Aorta (tissue), 5 donors: ENCODE measurements at regions of chr1 and their contacts with region 1.

Region 1: GRCh38 chr1:58783993-58784757 is at the start of gene JUN:
- DNase-seq: peak; percentile 100
- ATAC-seq: peak; percentile 92
- H3K4me3 ChIP-seq: peak within 1 kb of the TSS; percentile 93 to 94
- H3K27ac ChIP-seq: peak within 1 kb of the TSS; percentile 91 to 100
- H3K4me1 ChIP-seq: no peaks in the 10 kb centered on the region
- H3K27me3 ChIP-seq: no peaks in the 10 kb centered on the region
- total RNA-seq, gene JUN: 101 to 275 TPM

Region 2: DNA sequence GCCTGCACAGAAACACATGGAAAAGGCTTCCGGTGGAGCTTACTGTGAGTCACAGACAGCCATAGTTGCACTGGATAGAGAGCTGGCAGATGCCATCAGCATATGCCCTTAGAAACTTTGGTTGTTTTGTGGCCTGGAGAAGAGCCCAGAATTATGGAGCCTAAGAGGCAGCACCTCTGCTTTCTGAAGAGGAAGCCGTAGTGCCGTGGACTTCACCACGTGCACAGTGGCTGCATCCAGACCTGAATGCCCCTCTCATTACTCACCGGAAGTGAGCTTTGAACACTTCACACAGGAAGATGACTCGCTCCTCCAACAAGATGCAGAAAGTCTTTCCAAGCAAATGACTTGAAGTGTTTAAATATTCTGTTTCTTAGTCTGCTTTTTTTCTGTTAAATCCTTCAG is 28.7 kb before region 1 on chr1:
- intact Hi-C with region 1: loop called in 1 of 2 experiments (anchors 1 kb)
- DNase-seq: peak; percentile 87 to 91
- ATAC-seq: peak; percentile 86
- H3K4me3 ChIP-seq: no peak overlapping the region
- H3K27ac ChIP-seq: peak overlapping the region; percentile 33 to 79
- H3K4me1 ChIP-seq: peaks cover 0 to 4% of the 10 kb centered on the region in 2 donors
- H3K27me3 ChIP-seq: no peaks in the 10 kb centered on the region

Region 3: DNA sequence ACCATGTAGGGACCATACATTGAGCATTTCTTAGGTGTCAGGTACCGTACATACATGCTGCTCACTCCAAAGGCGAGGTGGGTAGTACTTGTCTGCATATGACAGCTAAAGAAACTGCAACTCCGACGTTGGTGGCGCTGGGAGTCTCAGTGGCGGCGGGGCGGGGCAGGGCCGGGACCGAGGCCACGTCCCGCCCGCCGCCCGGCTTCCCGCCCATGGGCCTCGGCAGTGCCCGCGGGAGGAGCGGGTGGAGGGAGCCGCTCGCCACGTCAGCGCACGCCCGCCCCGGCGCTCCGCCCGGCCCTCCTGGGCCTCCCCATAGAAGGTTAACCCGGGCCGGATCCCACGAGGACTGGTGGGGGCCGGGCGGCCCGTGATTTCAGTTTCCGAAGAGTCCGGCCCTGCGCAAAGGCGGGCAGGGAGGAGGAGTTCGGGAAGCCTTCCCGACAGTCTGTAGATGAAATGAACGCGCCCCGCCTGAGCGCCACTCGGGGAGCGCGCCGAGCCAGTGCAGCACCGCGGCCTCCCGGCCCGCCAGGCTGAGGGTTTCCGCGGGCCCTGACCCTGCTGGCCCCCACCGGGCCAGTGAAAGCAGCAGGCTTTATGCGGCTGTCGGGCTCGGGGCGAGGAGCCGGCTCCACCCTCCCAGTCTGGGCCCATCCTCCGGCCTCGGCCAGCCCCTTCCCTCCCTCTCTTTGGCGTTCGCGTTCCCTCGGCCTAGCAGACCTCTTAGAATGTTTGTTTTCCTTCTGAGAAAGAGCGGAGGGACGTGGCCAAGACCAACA is 119.5 kb after region 1 on chr1:
- intact Hi-C with region 1: loop called (anchors 1 to 5 kb)
- DNase-seq: peak; percentile 97 to 98
- ATAC-seq: peak; percentile 98
- H3K4me3 ChIP-seq: peak overlapping the region; percentile 24 to 42
- H3K27ac ChIP-seq: peak overlapping the region; percentile 83 to 94
- H3K4me1 ChIP-seq: no peaks in the 10 kb centered on the region
- H3K27me3 ChIP-seq: no peaks in the 10 kb centered on the region

Region 4: GRCh38 chr1:59013276-59013927 is 229.2 kb after region 1 on chr1:
- intact Hi-C with region 1: loop called in 1 of 2 experiments (anchors 10 kb)
- DNase-seq: peak in 1 of 2 donors; percentile 60
- ATAC-seq: peak; percentile 66
- H3K4me3 ChIP-seq: no peak overlapping the region
- H3K27ac ChIP-seq: peak overlapping the region; percentile 83 to 95
- H3K4me1 ChIP-seq: peaks cover 0 to 3% of the 10 kb centered on the region in 2 donors
- H3K27me3 ChIP-seq: no peaks in the 10 kb centered on the region

Region 5: DNA sequence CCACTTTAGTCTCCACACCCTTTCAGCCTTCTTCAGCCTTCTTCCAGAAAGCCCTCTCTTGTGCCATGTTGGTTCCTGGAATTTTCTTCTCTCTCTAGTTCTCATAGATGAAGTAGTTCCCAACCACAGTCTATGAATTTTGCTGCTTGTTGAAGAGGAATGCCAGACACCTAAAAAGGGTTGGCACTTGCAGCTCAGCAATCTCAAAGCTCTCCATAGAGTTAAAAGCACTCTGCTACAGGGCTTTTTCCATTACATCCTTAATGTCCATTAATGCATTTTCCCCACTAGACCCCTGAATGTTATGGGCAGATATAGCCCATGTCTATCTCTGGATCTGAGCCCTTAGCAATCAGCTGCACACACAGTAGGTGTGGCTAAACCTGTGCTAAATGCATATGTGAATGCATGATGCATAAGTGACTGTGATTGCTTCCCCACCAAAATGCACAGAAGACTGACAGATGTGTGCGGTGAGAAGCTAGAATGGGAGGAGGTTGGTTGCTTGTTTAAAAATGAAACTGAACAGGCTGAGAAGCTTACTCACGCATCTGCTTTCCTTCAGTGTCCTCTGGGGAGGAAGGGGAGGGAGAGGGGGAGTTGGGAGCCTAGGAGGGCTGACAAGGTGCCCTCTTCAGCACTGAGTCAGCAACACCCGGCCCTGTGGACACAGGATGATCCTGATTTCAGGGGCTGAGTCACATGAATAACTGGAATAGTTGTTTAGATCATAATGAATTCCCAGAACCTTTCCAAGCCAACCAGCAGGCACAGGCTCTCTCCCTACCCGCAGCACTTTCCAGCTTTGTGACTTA is 366.6 kb after region 1 on chr1:
- intact Hi-C with region 1: loop called in 1 of 2 experiments (anchors 5 kb)
- DNase-seq: peak; percentile 86 to 88
- ATAC-seq: peak; percentile 83
- H3K4me3 ChIP-seq: peak overlapping the region in 1 of 2 donors; percentile 11
- H3K27ac ChIP-seq: peak overlapping the region; percentile 17 to 99
- H3K4me1 ChIP-seq: peaks cover 7 to 9% of the 10 kb centered on the region in 2 donors
- H3K27me3 ChIP-seq: no peaks in the 10 kb centered on the region

Region 6: GRCh38 chr1:59204001-59204400 is 419.8 kb after region 1 on chr1:
- intact Hi-C with region 1: loop called in 1 of 2 experiments (anchors 1 kb)
- DNase-seq: peak in 1 of 2 donors; percentile 83
- ATAC-seq: peak; percentile 94
- H3K4me3 ChIP-seq: no peak overlapping the region
- H3K27ac ChIP-seq: peak overlapping the region in 1 of 2 donors; percentile 72
- H3K4me1 ChIP-seq: peaks cover 0 to 7% of the 10 kb centered on the region in 2 donors
- H3K27me3 ChIP-seq: no peaks in the 10 kb centered on the region

Region 7: DNA sequence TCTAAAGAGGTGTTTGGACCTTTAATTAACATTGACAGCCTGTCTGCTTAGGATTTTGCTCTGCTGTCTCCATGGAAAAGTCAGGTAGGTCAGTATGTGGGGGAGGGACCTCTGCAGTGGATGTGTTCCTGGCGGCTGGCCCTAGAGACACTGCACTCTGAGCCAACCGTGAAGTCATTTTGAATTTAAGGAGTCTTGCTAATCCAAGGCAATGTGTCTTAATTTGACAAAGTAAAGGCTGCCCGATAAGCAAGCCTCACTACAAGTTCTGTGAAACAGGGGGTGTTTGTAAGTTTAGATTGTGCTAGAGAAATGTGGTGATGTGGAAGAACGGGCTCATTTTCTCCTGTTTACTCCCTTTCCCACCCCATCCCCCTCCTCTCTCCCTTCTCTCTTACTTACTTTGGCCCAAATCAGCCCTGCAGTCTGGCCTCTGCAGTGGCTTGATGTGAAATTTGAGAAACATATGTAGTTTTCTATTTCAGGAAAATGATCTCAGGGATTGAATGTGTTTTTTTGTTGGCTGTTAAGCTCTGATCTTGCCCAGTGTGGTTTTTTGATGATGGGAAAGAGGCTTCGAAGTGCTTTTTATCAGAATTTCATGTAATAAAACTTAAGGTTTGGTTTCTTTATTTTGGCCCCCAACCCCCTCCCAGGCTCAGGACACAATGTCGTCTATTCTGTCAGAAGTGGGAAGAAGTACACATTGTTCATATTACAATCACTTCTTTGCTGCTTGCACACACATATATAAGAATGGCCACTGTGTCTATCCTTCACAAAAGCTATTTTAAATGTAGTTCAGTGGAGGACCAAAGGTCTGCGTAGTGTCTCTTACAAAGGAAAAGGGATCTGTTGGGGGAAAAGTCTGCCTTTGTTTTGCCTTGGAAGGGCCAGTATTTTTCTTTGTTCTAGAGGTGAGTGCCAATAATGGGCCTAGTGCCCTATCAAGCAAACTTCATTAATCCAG is 609.3 kb after region 1 on chr1:
- intact Hi-C with region 1: loop called in 1 of 2 experiments (anchors 5 kb)
- DNase-seq: peak; percentile 85 to 89
- ATAC-seq: peak; percentile 95
- H3K4me3 ChIP-seq: no peak overlapping the region
- H3K27ac ChIP-seq: peak overlapping the region; percentile 93 to 100
- H3K4me1 ChIP-seq: peaks cover 6% of the 10 kb centered on the region in 2 donors
- H3K27me3 ChIP-seq: no peaks in the 10 kb centered on the region